Spleen (tissue), 13 donors: ENCODE measurements at regions of chr21 and their contacts with region 1.

Region 1: DNA sequence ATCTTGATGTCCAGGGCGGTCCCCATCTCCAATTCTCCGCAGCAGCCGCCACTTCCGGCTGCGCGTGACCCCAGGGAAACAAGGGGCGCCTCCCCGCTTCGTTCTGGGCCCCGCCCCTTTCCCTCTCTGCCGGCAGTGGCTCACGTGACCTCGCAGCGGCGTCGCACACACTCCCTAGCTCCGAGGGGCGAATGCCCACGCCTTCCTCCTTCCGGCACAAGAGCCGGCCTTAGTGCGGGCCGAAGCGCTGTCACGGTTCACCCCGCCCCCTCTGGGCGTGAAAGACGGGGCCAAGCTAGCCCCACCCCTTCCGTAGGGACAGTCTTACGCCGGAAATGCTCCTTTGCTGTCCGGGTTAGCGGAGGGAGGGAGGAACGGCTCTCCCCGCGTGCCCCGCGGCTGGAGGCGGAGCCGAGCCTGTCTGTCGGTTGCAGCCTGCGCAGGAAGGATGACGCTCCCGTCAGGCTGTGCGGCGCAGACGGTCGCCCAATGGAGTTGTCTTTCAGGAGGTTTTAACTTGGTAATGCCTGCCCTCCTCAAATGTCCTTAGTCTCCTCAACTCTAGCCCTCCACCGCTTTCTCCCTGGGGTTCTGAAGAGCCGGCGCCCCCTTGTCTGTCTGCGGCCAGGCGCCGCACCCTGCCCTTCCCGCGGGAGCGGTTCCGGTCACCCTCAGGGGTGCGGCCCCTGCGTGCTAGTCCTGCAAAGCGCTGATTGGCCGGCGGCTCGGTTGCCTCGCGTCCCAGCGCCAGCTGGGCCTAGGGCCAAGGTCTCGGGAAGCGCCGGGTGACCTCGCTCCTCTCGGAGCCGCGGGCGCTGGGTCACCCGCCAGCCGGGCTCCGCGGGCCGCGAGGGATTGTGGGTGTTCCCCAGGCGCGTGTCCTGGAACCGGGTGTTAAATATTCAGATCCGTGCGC is at the start of gene VPS26C:
- DNase-seq: peak; percentile 100
- H3K4me3 ChIP-seq: peak within 1 kb of the TSS; percentile 66 to 93 (median 88)
- H3K27ac ChIP-seq: peak within 1 kb of the TSS; percentile 93 to 100 (median 98)
- H3K4me1 ChIP-seq: peaks cover 9 to 56% (median 45%) of the 10 kb centered on the region in 6 donors
- H3K27me3 ChIP-seq: no peaks in the 10 kb centered on the region
- CTCF ChIP-seq: peak in 3 of 11 experiments; percentile 36 to 61 (median 42)
- POLR2A ChIP-seq: peak in 2 of 3 donors; percentile 37 to 73
- total RNA-seq, gene VPS26C: 48.7 to 76.9 (median 58.4) TPM

Region 2: GRCh38 chr21:37364722-37365121 is 97.2 kb after region 1 on chr21:
- intact Hi-C with region 1: loop called (anchors 5 kb)
- DNase-seq: no peak
- H3K4me3 ChIP-seq: peak overlapping the region in 4 of 8 donors; percentile 78 to 88 (median 83)
- H3K27ac ChIP-seq: peak overlapping the region in 7 of 8 donors; percentile 99 to 100 (median 100)
- H3K4me1 ChIP-seq: peaks cover 13 to 33% (median 27%) of the 10 kb centered on the region in 6 donors
- H3K27me3 ChIP-seq: no peaks in the 10 kb centered on the region
- CTCF ChIP-seq: no peak
- POLR2A ChIP-seq: no peak

Region 3: DNA sequence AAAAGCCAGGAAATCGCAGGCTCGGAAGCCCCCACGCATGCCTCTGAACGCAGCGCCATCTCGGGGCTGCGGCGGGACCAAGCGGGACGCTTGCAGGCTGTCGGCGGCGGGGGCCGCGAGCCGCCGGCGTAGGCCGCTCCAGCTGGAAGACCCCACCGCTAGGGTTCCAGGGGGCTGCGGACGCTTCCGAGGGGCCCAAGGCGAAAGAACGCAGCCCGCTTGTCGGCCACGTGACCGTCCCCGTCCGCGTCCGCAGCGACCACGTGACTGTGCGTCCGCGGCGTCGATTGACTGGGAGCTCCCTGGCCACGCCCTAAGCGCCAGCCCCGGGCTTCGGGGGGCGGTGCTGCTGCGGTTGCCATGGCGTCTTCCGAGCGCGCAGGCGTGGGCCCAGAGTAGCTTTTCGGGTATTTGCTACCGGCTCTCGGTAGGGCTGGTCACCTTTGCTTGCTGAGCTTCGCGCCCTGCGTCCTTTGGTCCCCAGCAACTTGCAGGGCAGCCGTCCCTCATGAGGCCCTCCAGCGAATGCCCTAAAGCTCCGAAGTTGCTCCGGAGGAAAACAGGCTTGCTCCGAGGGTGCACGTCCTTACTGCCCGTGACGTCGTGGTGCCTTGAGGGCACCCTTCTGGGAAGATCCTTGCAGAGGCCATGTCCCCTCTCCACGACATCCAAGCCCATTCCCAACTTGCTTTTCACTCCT is 296.3 kb after region 1 on chr21:
- intact Hi-C with region 1: loop called (anchors 10 kb)
- DNase-seq: peak; percentile 99
- H3K4me3 ChIP-seq: peak overlapping the region; percentile 56 to 86 (median 82)
- H3K27ac ChIP-seq: peak overlapping the region; percentile 78 to 95 (median 94)
- H3K4me1 ChIP-seq: peaks cover 6 to 31% (median 18%) of the 10 kb centered on the region in 6 donors
- H3K27me3 ChIP-seq: no peaks in the 10 kb centered on the region
- CTCF ChIP-seq: peak in 10 of 11 experiments; percentile 39 to 69 (median 47)
- POLR2A ChIP-seq: peak in 1 of 3 donors; percentile 5

Region 4: DNA sequence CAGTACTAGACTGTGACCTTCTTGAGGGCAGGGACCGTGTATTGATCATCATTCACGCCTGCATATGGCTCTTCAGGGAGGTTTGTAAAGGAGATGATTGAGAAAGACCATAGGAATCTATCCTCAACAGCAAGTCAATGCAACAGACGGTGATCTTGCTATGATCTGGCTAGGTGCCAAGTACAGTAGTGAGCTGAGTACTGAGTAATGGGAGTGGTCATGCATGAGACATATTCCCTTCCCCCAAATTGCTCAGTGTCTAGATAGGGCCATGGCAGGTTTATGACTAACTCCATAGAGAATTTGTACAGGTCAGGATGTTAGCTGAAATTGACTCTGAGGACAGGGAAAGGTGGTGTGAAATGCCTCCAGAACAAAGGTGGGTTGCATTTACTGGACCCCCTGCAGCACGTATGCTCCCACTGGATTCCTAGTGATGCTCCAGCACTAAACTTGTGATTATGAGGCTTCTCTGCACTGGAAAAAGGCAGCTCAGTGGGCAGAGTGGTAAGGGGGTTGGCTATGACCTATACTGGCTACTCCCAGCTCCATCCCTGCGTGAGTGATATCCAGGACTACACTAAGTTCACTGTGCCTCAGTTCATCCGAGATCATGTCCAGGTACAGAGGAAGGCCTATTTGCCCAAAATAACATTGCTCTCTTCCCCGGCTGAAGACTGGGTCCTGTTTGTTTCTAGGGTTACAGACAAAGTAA is 611.6 kb after region 1 on chr21:
- intact Hi-C with region 1: no loop called
- DNase-seq: no peak
- H3K4me3 ChIP-seq: no peak overlapping the region
- H3K27ac ChIP-seq: no peak overlapping the region
- H3K4me1 ChIP-seq: no peaks in the 10 kb centered on the region
- H3K27me3 ChIP-seq: peaks cover 0 to 7% (median 0%) of the 10 kb centered on the region in 7 donors
- CTCF ChIP-seq: no peak
- POLR2A ChIP-seq: no peak